ENCODE measurements at regions of chr1 and their contacts with region 1.

Region 1: DNA sequence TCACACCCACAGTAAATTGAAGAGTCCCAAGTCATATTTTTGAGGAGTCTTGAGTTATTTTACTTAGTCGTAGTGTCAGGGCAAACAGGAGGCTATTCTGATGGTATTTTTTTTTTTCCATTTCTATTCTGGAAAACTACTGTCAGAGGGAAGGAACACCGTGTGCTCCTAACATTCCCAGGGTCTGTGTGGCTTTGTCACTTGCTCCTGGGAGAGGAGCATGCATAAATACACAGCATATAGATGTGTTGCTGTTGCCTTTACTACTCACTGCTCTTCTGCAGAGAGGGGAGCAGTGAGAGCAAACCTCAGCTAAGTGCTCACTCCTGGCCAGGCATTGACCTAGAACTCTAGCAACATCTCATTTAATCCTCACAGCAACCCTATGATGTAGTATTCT is 45.8 kb downstream of the COLGALT2 start:
- DNase-seq: no peak
- H3K4me3 ChIP-seq: no peak overlapping the region
- H3K27ac ChIP-seq: no peak overlapping the region
- H3K4me1 ChIP-seq: no peaks in the 10 kb centered on the region
- H3K27me3 ChIP-seq: no peaks in the 10 kb centered on the region
- CTCF ChIP-seq: no peak

Region 2: DNA sequence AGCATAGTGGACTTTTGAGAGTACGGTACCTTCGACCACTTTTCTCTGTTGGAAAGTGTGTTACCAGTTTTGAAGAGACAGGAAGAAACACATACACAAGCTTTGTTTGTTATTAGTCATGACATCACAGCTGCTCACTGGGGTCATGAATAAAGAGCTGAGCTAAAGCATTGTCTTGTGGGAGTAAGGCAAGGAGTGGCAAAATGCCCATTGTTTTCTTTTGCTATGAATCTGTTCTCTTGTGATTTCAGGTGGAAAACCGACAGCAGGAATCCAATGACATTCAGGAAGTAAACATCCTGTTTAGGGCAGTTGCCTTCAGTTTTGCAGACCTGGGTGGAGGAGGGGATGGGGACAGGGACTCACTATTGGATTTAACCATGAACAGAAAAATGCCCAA is 120.6 kb before region 1 on chr1:
- intact Hi-C with region 1: no loop called
- DNase-seq: no peak
- H3K4me3 ChIP-seq: no peak overlapping the region
- H3K27ac ChIP-seq: no peak overlapping the region
- H3K4me1 ChIP-seq: peaks cover 0 to 4% (median 2%) of the 10 kb centered on the region in 4 donors
- H3K27me3 ChIP-seq: no peaks in the 10 kb centered on the region
- CTCF ChIP-seq: no peak

Region 3: GRCh38 chr1:183975651-183976050 is 16.1 kb before region 1 on chr1:
- intact Hi-C with region 1: loop called (anchors 2 kb)
- DNase-seq: no peak
- H3K4me3 ChIP-seq: no peak overlapping the region
- H3K27ac ChIP-seq: no peak overlapping the region
- H3K4me1 ChIP-seq: no peaks in the 10 kb centered on the region
- H3K27me3 ChIP-seq: no peaks in the 10 kb centered on the region
- CTCF ChIP-seq: no peak

Measured in tibial artery (tissue), 4 donors.